WTC11 (cell line): ENCODE measurements at regions of chr4 and their contacts with region 1.

Region 1: DNA sequence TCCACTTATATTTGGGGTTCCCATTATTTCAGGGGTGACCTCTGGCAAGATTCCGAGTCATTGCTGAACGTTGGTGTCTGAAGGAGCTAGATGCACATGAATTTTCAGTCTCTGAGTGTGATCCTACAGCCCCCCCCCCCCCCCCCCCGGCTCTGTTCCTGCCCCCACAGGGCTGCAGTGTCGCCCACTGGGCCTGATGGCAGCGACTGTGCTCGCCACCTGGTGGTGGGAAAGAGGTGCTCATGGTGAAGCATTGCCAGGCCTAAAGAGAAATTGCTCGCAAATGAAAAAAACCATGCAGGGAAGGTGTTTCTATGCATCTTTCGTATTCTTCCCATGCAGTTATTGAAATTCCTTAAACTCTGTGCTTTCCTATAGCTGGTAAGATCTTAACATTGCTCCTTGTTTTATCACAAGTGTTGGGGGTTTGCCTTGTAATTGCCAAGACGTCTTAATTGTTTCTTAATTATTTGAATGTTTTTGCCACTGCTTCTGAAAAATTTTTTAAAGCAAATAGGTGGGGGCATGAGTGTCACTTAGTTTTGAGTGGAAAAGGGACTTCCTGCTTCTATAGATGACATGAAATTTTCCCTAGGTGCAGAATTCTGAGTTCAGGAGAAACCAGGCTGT is 63.2 kb downstream of the CLDN22 start:
- DNase-seq: peak; percentile 67
- ATAC-seq: peak; percentile 78
- H3K4me3 Mint-ChIP-seq: no peak overlapping the region
- H3K27ac Mint-ChIP-seq: no peak overlapping the region
- H3K4me1 Mint-ChIP-seq: peaks cover 14% of the 10 kb centered on the region
- H3K27me3 Mint-ChIP-seq: no peaks in the 10 kb centered on the region
- CTCF ChIP-seq: peak; percentile 76

Region 2: DNA sequence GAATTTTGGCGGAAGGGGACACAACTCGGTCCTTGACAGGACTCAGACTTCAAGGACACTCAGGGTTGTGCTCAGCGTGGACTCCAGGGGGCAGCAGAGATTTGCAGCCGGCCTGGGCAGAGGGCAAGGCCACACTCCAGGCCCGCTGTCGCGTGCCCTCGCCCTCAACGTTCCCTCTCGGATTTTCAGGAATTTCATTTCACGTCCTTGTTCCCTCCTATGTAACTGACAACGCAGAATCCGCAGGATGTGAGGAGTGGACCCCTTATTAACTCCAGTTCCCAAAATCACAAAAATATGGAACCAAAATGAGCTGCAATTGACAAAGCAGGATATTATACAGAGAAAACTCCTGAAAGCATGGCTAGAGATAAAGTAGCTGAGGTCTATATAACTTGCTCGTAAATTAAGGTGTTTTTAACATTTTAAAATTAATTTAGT is 318.6 kb before region 1 on chr4:
- CTCF ChIA-PET with region 1: interaction called, 40 read pairs
- POLR2A ChIA-PET with region 1: no interaction called
- DNase-seq: peak; percentile 86
- ATAC-seq: peak; percentile 100
- H3K4me3 Mint-ChIP-seq: no peak overlapping the region
- H3K27ac Mint-ChIP-seq: no peak overlapping the region
- H3K4me1 Mint-ChIP-seq: peaks cover 16% of the 10 kb centered on the region
- H3K27me3 Mint-ChIP-seq: peaks cover 6% of the 10 kb centered on the region; the same call in 1 of the 2 replicates
- CTCF ChIP-seq: peak; percentile 86

Region 3: DNA sequence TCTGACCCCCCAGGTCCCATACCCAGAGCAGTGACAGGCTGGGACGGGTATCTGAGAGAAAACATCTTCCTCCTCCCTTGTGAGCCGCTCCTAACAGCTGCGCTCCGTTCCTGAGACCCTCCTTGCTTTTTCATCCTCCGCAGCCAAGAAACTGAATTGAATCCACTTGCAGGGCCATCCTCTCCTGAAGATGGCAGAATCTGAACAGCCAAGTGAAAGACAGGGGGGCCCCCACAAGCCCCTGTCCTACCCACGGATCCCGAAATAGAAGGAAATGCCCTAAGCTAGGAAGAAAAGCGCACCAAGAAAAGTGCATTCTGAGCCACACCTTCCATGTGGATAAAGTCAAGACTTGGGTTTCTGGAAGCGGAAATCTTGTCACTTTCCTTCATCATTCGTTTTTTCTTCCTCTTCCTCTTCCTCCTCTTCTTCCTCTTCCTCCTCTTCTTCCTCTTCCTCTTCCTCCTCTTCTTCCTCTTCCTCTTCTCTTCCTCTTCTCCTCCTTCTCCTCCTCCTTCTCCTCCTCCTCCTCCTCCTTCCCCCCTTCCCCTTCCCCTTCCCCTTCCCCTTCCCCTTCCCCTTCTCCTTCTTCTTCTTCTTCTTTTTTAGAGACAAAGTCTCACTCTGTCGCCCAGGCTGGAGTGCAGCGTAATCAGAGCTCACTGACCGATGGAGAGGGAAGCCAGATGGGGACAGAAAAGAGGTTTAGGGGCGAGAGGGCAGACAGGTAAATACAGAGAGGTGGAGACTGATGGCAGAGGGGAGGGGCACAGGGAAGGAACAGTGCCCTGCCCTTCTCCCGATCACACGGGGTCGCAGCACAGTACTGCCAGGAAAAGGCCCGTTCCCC is 243.8 kb before region 1 on chr4:
- CTCF ChIA-PET with region 1: interaction called, 20 read pairs
- POLR2A ChIA-PET with region 1: no interaction called
- DNase-seq: peak; percentile 21
- ATAC-seq: peak; percentile 85
- H3K4me3 Mint-ChIP-seq: peak overlapping the region; percentile 69
- H3K27ac Mint-ChIP-seq: no peak overlapping the region
- H3K4me1 Mint-ChIP-seq: peaks cover 11% of the 10 kb centered on the region
- H3K27me3 Mint-ChIP-seq: no peaks in the 10 kb centered on the region; the same call in 1 of the 2 replicates
- CTCF ChIP-seq: no peak

Region 4: GRCh38 chr4:183074296-183074990 is 182.4 kb before region 1 on chr4:
- CTCF ChIA-PET with region 1: interaction called, 73 read pairs
- POLR2A ChIA-PET with region 1: interaction called, 4 read pairs
- DNase-seq: no peak
- ATAC-seq: peak; percentile 37
- H3K4me3 Mint-ChIP-seq: peak overlapping the region; percentile 31
- H3K27ac Mint-ChIP-seq: peak overlapping the region; percentile 81
- H3K4me1 Mint-ChIP-seq: peaks cover 32% of the 10 kb centered on the region
- H3K27me3 Mint-ChIP-seq: no peaks in the 10 kb centered on the region
- CTCF ChIP-seq: no peak

Region 5: GRCh38 chr4:183080372-183081115 is 176.3 kb before region 1 on chr4:
- CTCF ChIA-PET with region 1: interaction called, 73 read pairs
- POLR2A ChIA-PET with region 1: no interaction called
- DNase-seq: no peak
- ATAC-seq: peak; percentile 38
- H3K4me3 Mint-ChIP-seq: no peak overlapping the region
- H3K27ac Mint-ChIP-seq: no peak overlapping the region
- H3K4me1 Mint-ChIP-seq: peaks cover 20% of the 10 kb centered on the region
- H3K27me3 Mint-ChIP-seq: no peaks in the 10 kb centered on the region; the same call in 1 of the 2 replicates
- CTCF ChIP-seq: no peak

Region 6: GRCh38 chr4:183098723-183099536 is 157.9 kb before region 1 on chr4 and contains the start of gene WWC2:
- CTCF ChIA-PET with region 1: interaction called, 22 read pairs
- POLR2A ChIA-PET with region 1: no interaction called
- DNase-seq: peak; percentile 96
- ATAC-seq: peak; percentile 80
- H3K4me3 Mint-ChIP-seq: peak within 1 kb of the TSS; percentile 91
- H3K27ac Mint-ChIP-seq: peak within 1 kb of the TSS; percentile 68
- H3K4me1 Mint-ChIP-seq: peaks cover 47% of the 10 kb centered on the region
- H3K27me3 Mint-ChIP-seq: peaks cover 3% of the 10 kb centered on the region
- CTCF ChIP-seq: no peak
- total RNA-seq, gene WWC2: 126 to 133 TPM (median 133 TPM) in 3 replicates

Region 7: DNA sequence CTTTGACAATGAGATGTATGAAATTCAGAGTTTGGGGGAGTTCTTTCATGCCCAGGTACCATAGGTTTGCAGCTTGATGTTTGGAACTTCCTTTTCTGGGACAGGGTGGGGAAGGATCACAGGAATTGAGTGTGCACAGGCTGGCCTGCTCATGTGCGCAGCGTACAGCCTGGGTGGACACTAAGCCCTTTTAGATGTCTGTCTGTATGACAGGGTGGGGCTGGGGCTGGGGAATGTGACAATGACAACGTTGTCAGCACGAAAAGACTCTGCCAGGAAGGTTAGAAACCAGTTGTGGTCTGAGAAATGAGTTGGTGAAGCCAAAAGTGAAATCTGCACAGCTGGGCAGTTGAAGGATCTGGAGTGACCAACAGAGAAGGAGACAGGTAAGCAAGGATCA is 110.4 kb before region 1 on chr4:
- CTCF ChIA-PET with region 1: interaction called, 11 read pairs
- POLR2A ChIA-PET with region 1: no interaction called
- DNase-seq: no peak
- ATAC-seq: no peak
- H3K4me3 Mint-ChIP-seq: no peak overlapping the region
- H3K27ac Mint-ChIP-seq: peak overlapping the region; percentile 67
- H3K4me1 Mint-ChIP-seq: peaks cover 47% of the 10 kb centered on the region
- H3K27me3 Mint-ChIP-seq: no peaks in the 10 kb centered on the region
- CTCF ChIP-seq: no peak